Activated CD4-positive, alpha-beta memory T cell treated with anti-CD3 and anti-CD28 coated beads, Interleukin-2, amount 10 ng/mL, durations not matched to agents 7 days and 5 days (primary cell): ENCODE measurements at regions of chr12 and their contacts with region 1.

Region 1: GRCh38 chr12:53098982-53099651 is 1.6 kb downstream of the IGFBP6 start:
- DNase-seq: peak; percentile 90
- H3K4me3 Mint-ChIP-seq: peak overlapping the region; percentile 71
- H3K27ac Mint-ChIP-seq: peak overlapping the region; percentile 69
- H3K4me1 Mint-ChIP-seq: peaks cover 52% of the 10 kb centered on the region
- H3K27me3 Mint-ChIP-seq: peaks cover 15% of the 10 kb centered on the region

Region 2: GRCh38 chr12:53054112-53054833 is 44.8 kb before region 1 on chr12:
- CTCF ChIA-PET with region 1: interaction called, 10 read pairs
- POLR2A ChIA-PET with region 1: interaction called, 6 read pairs
- DNase-seq: peak; percentile 94
- H3K4me3 Mint-ChIP-seq: peak overlapping the region; percentile 87
- H3K27ac Mint-ChIP-seq: peak overlapping the region; percentile 77
- H3K4me1 Mint-ChIP-seq: peaks cover 14% of the 10 kb centered on the region
- H3K27me3 Mint-ChIP-seq: no peaks in the 10 kb centered on the region